OCI-LY7 (cell line): ENCODE measurements at regions of chr7 and their contacts with region 1.

Region 1: GRCh38 chr7:149497456-149498261 is at the start of gene ZNF746:
- DNase-seq: peak; percentile 91
- H3K4me3 ChIP-seq: peak within 1 kb of the TSS; percentile 100
- H3K27ac ChIP-seq: no peak within 1 kb of the TSS
- H3K4me1 ChIP-seq: peaks cover 16% of the 10 kb centered on the region
- CTCF ChIP-seq: 0 out of 2 replicates have a peak, but pooled peaks have one; percentile 42
- total RNA-seq, gene ZNF746: 14.8 and 17.3 TPM in 2 replicates

Region 2: DNA sequence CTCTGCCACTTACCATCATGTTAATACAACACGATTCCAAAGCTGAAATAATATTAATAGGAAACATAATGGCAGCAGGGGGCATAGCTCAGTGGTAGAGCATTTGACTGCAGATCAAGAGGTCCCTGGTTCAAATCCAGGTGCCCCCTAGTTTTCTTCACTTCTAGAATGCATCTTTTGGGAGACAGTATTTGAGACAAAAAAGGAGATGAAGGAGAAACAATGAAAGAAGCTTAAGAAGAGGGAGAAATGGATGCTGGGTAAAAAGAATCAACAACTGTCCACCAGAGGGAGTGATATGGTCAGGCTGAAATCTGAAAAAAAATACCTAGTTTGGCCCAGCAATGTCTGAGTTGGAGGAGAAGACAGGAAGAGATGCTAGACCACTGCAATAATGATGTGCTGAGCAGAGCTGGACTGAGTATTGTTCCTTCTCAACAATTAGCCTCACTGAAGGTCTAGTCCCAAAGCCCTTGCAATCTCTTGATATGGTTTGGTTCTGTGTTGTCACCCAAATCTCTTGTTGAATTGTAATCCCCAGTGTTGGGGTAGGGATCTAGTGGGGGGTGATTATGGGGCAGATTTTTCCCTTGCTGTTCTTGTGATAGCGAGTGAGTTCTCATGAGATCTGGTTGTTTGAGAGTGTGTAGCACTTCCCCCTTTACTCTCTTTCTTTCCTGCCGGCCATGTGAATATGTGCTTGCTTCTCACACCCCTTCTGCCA is 187.4 kb before region 1 on chr7:
- CTCF ChIA-PET with region 1: no interaction called
- POLR2A ChIA-PET with region 1: no interaction called
- intact Hi-C with region 1: loop called (anchors 10 kb)
- DNase-seq: peak; percentile 63
- H3K4me3 ChIP-seq: no peak overlapping the region
- H3K27ac ChIP-seq: no peak overlapping the region
- H3K4me1 ChIP-seq: no peaks in the 10 kb centered on the region
- CTCF ChIP-seq: peak; percentile 78